Naive thymus-derived CD4-positive, alpha-beta T cell (primary cell): ENCODE measurements at regions of chr3 and their contacts with region 1.

Region 1: DNA sequence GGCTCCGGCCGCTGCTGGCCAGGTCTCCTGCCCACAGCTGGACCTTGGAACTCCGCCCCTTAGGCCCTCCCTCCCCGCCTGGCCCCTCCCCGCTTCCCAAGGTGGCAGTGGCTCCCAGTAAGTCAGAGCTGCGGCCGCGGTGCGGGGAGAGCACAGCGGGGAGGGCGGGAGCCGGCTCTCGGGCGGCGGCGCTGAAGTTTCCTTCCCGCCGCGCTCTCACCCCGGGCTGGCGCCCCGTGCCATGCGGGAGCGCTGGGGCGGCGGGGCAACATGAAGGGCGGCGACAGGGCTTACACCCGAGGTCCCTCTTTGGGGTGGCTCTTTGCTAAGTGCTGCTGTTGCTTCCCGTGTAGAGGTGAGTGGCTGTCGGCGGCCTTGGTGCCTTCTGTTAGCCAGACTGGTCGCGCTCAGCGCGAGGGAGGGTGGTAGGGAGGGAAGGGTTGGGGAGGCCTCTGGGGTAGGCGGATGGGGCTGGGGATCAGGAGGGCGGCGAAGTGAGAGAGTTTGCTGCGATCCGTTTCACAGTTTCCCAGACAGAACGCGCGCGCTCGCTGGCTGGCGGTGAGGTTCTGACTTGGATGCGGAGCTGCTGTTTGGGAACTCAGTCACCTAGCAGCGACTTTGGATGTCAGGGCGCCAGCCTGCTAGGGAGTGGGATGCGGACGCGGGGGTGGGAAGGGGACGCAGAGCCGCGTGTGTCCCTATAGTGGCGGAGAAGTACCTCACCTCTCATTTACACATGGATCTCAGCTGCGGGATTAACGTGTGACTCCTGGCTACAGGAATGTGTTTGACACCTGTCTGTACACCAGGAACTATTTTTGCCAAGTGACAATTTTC is 145.5 kb upstream of the UMPS start:
- DNase-seq: peak in 6 of 9 donors; percentile 3 to 19 (median 11)
- ATAC-seq: peak; percentile 65
- H3K4me3 ChIP-seq: peak overlapping the region; percentile 63
- H3K4me3 Mint-ChIP-seq: peak overlapping the region; percentile 66 to 92 (median 82)
- H3K27ac ChIP-seq: no peak overlapping the region
- H3K27ac Mint-ChIP-seq: peak overlapping the region in 7 of 9 donors; percentile 8 to 75 (median 56)
- H3K4me1 ChIP-seq: peaks cover 0 to 23% of the 10 kb centered on the region in 2 donors
- H3K4me1 Mint-ChIP-seq: peaks cover 12 to 44% (median 23%) of the 10 kb centered on the region in 7 donors
- H3K27me3 ChIP-seq: no peaks in the 10 kb centered on the region
- H3K27me3 Mint-ChIP-seq: peaks cover 0 to 74% (median 45%) of the 10 kb centered on the region in 5 donors

Region 2: GRCh38 chr3:124639406-124640237 is 54.9 kb after region 1 on chr3:
- CTCF ChIA-PET with region 1: no interaction called
- POLR2A ChIA-PET with region 1: no interaction called
- intact Hi-C with region 1: loop called in 1 of 2 experiments (anchors 5 kb)
- DNase-seq: peak in 1 of 9 donors; percentile 3
- ATAC-seq: peak; percentile 78
- H3K4me3 ChIP-seq: no peak overlapping the region
- H3K4me3 Mint-ChIP-seq: peak overlapping the region in 8 of 10 donors; percentile 44 to 76 (median 59)
- H3K27ac ChIP-seq: peak overlapping the region; percentile 29
- H3K27ac Mint-ChIP-seq: peak overlapping the region in 6 of 9 donors; percentile 32 to 88 (median 50)
- H3K4me1 ChIP-seq: peaks cover 0 to 9% of the 10 kb centered on the region in 2 donors
- H3K4me1 Mint-ChIP-seq: peaks cover 5 to 50% (median 12%) of the 10 kb centered on the region in 7 donors
- H3K27me3 ChIP-seq: no peaks in the 10 kb centered on the region
- H3K27me3 Mint-ChIP-seq: peaks cover 0 to 66% (median 0%) of the 10 kb centered on the region in 5 donors

Region 3: GRCh38 chr3:124688581-124689454 is 104.0 kb after region 1 on chr3:
- CTCF ChIA-PET with region 1: no interaction called
- POLR2A ChIA-PET with region 1: no interaction called
- intact Hi-C with region 1: loop called in 1 of 2 experiments (anchors 5 kb)
- DNase-seq: peak; percentile 26 to 69 (median 49)
- ATAC-seq: peak; percentile 90
- H3K4me3 ChIP-seq: no peak overlapping the region
- H3K4me3 Mint-ChIP-seq: no peak overlapping the region
- H3K27ac ChIP-seq: no peak overlapping the region
- H3K27ac Mint-ChIP-seq: no peak overlapping the region
- H3K4me1 ChIP-seq: no peaks in the 10 kb centered on the region
- H3K4me1 Mint-ChIP-seq: peaks cover 0 to 7% (median 2%) of the 10 kb centered on the region in 7 donors
- H3K27me3 ChIP-seq: peaks cover 0 to 4% of the 10 kb centered on the region in 2 donors
- H3K27me3 Mint-ChIP-seq: peaks cover 0 to 56% (median 18%) of the 10 kb centered on the region in 5 donors

Region 4: GRCh38 chr3:124826703-124827102 is 241.9 kb after region 1 on chr3:
- CTCF ChIA-PET with region 1: no interaction called
- POLR2A ChIA-PET with region 1: no interaction called
- intact Hi-C with region 1: no loop called
- DNase-seq: no peak
- ATAC-seq: no peak
- H3K4me3 ChIP-seq: no peak overlapping the region
- H3K4me3 Mint-ChIP-seq: no peak overlapping the region
- H3K27ac ChIP-seq: no peak overlapping the region
- H3K27ac Mint-ChIP-seq: no peak overlapping the region
- H3K4me1 ChIP-seq: no peaks in the 10 kb centered on the region
- H3K4me1 Mint-ChIP-seq: no peaks in the 10 kb centered on the region
- H3K27me3 ChIP-seq: no peaks in the 10 kb centered on the region
- H3K27me3 Mint-ChIP-seq: peaks cover 0 to 30% (median 8%) of the 10 kb centered on the region in 5 donors